CD4-positive, alpha-beta T cell (primary cell): ENCODE measurements at regions of chr18 and their contacts with region 1.

Region 1: DNA sequence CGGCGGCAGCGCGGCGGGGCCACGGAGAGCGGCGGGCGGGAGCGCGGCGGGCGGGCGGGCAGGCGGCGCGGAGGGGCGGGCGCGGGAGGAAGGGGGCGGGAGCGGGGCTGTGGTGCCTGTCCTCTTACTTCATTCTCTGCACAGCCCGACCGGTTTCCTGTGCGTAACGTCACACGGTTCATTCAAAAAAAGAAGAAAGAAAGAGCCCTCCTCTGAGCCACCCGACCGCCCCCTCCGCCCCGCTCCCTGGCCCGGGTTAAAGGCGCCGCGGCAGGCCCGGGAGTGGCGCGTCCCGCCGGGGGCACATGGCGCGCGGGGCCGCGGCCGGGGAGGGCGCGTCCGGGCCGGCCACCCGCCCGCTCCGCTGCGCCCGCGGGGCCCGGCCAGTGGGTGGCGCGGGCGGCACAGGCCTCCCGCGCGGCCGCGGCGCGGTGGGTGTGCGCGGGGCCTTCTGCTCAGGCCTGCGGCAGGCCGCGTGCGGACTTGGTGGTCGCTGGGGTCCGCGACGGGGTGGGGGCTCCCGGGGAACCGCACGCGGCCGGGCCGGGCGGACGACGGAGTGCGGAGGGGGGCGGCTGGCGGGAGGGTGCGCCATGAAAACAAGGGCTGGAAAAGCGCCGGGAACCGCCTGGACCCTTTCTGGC is 599 bp upstream of the BCL2 start:
- DNase-seq: peak; percentile 76 to 96 (median 84)
- ATAC-seq: peak; percentile 80
- H3K4me3 ChIP-seq: peak overlapping the region; percentile 94
- H3K4me3 Mint-ChIP-seq: peak overlapping the region; percentile 92
- H3K27ac ChIP-seq: peak overlapping the region in 1 of 2 donors; percentile 46
- H3K27ac Mint-ChIP-seq: peak overlapping the region; percentile 95
- H3K4me1 ChIP-seq: peaks cover 17% of the 10 kb centered on the region
- H3K4me1 Mint-ChIP-seq: peaks cover 56% of the 10 kb centered on the region
- H3K27me3 ChIP-seq: no peaks in the 10 kb centered on the region
- H3K27me3 Mint-ChIP-seq: no peaks in the 10 kb centered on the region
- CTCF ChIP-seq: no peak

Region 2: DNA sequence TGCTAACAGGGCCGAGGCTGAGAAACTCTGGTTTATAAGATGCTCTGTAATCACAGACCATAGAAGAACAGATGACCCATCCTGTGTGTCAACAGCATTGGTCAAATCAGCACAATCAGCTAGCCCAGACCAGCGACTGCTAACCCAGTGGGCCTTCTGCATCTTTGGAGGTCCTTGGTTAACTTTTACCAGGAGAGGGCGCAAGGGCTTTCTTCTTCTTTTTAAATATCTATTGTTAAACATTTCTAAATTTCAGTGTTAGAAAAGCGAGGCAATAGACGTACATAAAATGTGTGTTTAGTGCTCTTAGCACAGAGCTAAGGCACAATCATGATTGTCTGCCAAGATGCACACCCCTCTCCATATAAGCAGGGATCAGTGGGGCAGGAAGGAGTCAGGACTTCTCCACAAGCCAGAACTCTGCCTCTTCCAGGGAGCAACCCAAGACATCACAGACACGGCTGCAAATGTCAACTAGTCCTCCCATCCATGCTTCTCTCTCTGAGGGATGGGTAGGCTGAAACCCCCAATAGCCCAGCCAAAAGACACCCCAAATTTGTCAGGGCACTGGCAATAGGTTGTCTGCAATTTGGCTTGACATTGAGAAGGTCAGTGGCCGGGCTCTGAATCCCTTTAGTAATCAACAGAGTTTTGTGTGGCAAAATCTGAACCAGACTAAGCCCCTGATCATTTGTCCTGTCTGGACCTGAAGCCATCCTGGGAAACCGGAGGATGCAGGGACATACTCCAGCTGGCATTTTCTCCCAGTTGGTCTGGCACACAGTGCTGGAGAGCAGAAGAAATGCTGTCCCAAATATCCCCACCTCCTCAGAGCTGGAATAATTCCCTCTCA is 188.8 kb before region 1 on chr18:
- CTCF ChIA-PET with region 1: interaction called, 49 read pairs
- POLR2A ChIA-PET with region 1: interaction called, 23 read pairs
- intact Hi-C with region 1: loop called (anchors 1 kb)
- DNase-seq: peak; percentile 35 to 81 (median 52)
- ATAC-seq: peak; percentile 74
- H3K4me3 ChIP-seq: no peak overlapping the region
- H3K4me3 Mint-ChIP-seq: peak overlapping the region; percentile 13
- H3K27ac ChIP-seq: no peak overlapping the region
- H3K27ac Mint-ChIP-seq: peak overlapping the region; percentile 36
- H3K4me1 ChIP-seq: peaks cover 26% of the 10 kb centered on the region
- H3K4me1 Mint-ChIP-seq: peaks cover 31% of the 10 kb centered on the region
- H3K27me3 ChIP-seq: no peaks in the 10 kb centered on the region
- H3K27me3 Mint-ChIP-seq: no peaks in the 10 kb centered on the region
- CTCF ChIP-seq: peak; percentile 82

Region 3: GRCh38 chr18:63161761-63162195 is 158.4 kb before region 1 on chr18:
- CTCF ChIA-PET with region 1: interaction called, 12 read pairs
- POLR2A ChIA-PET with region 1: interaction called, 34 read pairs
- intact Hi-C with region 1: loop called in 1 of 2 experiments (anchors 1 kb)
- DNase-seq: peak; percentile 66 to 94 (median 74)
- ATAC-seq: peak; percentile 84
- H3K4me3 ChIP-seq: peak overlapping the region; percentile 38
- H3K4me3 Mint-ChIP-seq: peak overlapping the region; percentile 65
- H3K27ac ChIP-seq: peak overlapping the region; percentile 95 to 96
- H3K27ac Mint-ChIP-seq: peak overlapping the region; percentile 91
- H3K4me1 ChIP-seq: peaks cover 81% of the 10 kb centered on the region
- H3K4me1 Mint-ChIP-seq: peaks cover 78% of the 10 kb centered on the region
- H3K27me3 ChIP-seq: no peaks in the 10 kb centered on the region
- H3K27me3 Mint-ChIP-seq: no peaks in the 10 kb centered on the region
- CTCF ChIP-seq: no peak

Region 4: GRCh38 chr18:63237881-63238667 is 82.1 kb before region 1 on chr18:
- CTCF ChIA-PET with region 1: interaction called, 8 read pairs
- POLR2A ChIA-PET with region 1: interaction called, 4 read pairs
- intact Hi-C with region 1: loop called in 1 of 2 experiments (anchors 5 kb)
- DNase-seq: no peak
- ATAC-seq: no peak
- H3K4me3 ChIP-seq: no peak overlapping the region
- H3K4me3 Mint-ChIP-seq: no peak overlapping the region
- H3K27ac ChIP-seq: peak overlapping the region in 1 of 2 donors; percentile 1
- H3K27ac Mint-ChIP-seq: no peak overlapping the region
- H3K4me1 ChIP-seq: peaks cover 22% of the 10 kb centered on the region
- H3K4me1 Mint-ChIP-seq: peaks cover 48% of the 10 kb centered on the region
- H3K27me3 ChIP-seq: no peaks in the 10 kb centered on the region
- H3K27me3 Mint-ChIP-seq: no peaks in the 10 kb centered on the region
- CTCF ChIP-seq: no peak

Region 5: DNA sequence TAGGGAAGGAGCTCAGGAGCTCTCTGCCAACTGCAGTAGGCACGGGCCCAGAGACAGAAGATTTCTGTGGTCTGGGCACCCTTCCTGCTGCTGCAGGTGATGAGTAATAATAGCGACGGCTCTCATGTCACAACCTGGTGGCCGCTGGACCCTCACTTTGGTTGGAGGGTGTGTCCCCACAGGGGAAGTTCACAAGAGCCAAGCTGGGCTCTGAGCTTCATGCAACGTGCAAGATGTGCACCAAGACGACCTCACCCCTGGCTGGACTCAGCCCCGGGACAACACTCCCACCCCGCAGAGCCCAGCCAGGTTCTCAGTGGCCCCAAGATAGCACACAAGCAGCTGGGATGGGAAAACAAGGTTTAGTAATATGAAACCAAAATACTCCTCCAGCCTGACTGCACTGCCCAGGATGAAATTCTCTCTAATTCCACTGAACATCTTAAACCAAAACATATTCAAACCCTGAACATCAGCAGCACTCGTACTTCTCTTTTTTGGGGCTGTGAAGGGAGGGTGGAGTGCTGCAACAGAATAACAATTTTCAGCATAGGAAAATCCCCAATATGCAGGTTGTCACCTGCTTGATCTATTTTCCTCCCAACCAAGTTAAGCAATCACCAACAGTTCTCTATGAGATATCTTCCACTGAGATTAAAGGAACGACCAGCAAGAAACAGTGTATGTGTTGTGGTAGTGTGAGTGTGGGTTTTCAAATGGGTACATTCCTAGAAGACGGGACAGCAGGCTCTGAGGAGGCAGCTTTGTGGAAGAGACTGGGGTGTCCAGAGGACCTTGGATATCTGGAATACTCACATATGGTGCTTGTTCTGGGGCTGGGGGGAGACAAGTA is 27.1 kb before region 1 on chr18:
- CTCF ChIA-PET with region 1: interaction called, 13 read pairs
- POLR2A ChIA-PET with region 1: interaction called, 31 read pairs
- intact Hi-C with region 1: no loop called
- DNase-seq: peak in 10 of 14 experiments; percentile 11 to 60 (median 38)
- ATAC-seq: peak; percentile 38
- H3K4me3 ChIP-seq: peak overlapping the region; percentile 6
- H3K4me3 Mint-ChIP-seq: peak overlapping the region; percentile 26
- H3K27ac ChIP-seq: peak overlapping the region; percentile 14 to 35
- H3K27ac Mint-ChIP-seq: no peak overlapping the region
- H3K4me1 ChIP-seq: peaks cover 68% of the 10 kb centered on the region
- H3K4me1 Mint-ChIP-seq: peaks cover 10% of the 10 kb centered on the region
- H3K27me3 ChIP-seq: no peaks in the 10 kb centered on the region
- H3K27me3 Mint-ChIP-seq: no peaks in the 10 kb centered on the region
- CTCF ChIP-seq: no peak

Region 6: DNA sequence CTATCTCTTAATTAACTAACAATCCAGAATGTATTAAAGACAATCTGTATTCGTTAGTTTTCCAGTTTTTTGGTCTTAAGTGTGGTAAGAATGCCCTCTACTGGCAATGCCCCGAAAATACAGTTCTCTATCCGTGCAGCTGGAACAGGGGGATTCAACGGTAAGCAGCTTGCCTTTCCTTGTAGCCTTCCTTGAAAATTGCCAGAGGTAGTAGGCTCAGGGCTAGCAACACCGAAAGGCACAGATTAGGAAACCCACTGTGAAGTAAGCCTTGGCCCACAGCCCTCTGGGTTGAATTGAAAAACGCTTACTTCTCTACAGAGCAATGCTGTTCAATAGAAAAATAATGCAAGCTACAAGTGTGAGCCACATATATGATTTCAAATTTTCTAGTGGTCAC is 119.2 kb after region 1 on chr18:
- CTCF ChIA-PET with region 1: interaction called, 7 read pairs
- POLR2A ChIA-PET with region 1: no interaction called
- intact Hi-C with region 1: loop called in 1 of 2 experiments (anchors 5 kb)
- DNase-seq: peak; percentile 7 to 79 (median 32)
- ATAC-seq: peak; percentile 79
- H3K4me3 ChIP-seq: no peak overlapping the region
- H3K4me3 Mint-ChIP-seq: no peak overlapping the region
- H3K27ac ChIP-seq: no peak overlapping the region
- H3K27ac Mint-ChIP-seq: no peak overlapping the region
- H3K4me1 ChIP-seq: no peaks in the 10 kb centered on the region
- H3K4me1 Mint-ChIP-seq: no peaks in the 10 kb centered on the region
- H3K27me3 ChIP-seq: no peaks in the 10 kb centered on the region
- H3K27me3 Mint-ChIP-seq: peaks cover 21% of the 10 kb centered on the region
- CTCF ChIP-seq: peak; percentile 95